Activated T-helper 1 cell treated with anti-CD3 and anti-CD28 coated beads, Interleukin-12 subunit alpha, Interleukin-12 subunit beta, Interleukin-2, Interleukin-4 antibody, amounts not matched to agents 30 ng/mL and 10 ng/mL and 1 ng/mL, durations not matched to agents 14 hours and 24 hours and 36 hours (primary cell): ENCODE measurements at regions of chr20 and their contacts with region 1.

Region 1: DNA sequence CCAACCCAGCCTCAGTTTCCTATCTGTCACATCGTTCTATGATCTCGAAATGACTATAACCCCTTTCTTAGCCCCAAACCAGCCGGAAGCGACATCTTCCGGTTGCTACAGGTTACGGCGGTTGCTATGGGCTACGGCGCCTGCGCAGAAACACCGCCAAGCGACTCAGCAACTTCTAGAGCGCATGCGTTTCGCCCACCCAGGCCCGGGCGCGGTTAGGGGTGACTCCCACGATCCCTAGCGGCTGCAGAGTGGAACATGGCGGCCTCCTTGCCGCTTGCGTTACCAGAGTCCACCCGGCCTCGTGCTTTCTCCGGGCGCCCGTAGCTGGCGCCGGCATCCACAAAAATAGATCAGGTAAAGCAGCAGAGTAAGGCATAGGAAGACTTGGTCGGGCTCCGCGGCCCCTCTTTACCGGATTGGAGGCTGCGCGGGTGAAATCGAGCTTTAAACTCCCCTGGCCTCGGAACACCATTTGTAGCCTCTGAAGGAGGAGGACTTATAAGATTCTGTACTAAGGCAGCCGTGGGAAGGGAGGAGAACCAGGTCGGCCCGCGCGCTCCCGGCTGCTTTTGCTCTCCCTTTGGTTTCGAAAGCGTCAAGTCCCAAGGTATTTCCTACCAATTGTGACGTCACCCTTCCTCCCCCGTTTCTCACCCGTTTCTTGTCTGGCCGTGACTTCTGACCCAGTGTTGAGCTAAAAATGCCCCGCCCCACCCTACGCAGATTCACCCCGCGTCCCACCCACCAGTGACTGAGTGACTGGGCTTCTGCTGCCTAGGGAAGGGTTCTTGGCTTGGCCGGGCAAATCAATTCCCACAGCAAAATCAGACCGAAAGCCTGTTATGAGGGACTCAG is 3.5 kb downstream of the SDCBP2 start:
- DNase-seq: peak; percentile 98
- H3K4me3 Mint-ChIP-seq: no peak overlapping the region
- H3K27ac Mint-ChIP-seq: no peak overlapping the region
- H3K4me1 Mint-ChIP-seq: peaks cover 14% of the 10 kb centered on the region
- H3K27me3 Mint-ChIP-seq: peaks cover 6% of the 10 kb centered on the region

Region 2: GRCh38 chr20:1225783-1226654 is 99.4 kb before region 1 on chr20 and contains the start of gene RAD21L1:
- intact Hi-C with region 1: loop called (anchors 1 kb)
- DNase-seq: peak; percentile 57
- H3K4me3 Mint-ChIP-seq: peak within 1 kb of the TSS; percentile 84
- H3K27ac Mint-ChIP-seq: no peak within 1 kb of the TSS
- H3K4me1 Mint-ChIP-seq: peaks cover 7% of the 10 kb centered on the region
- H3K27me3 Mint-ChIP-seq: peaks cover 36% of the 10 kb centered on the region
- total RNA-seq, gene RAD21L1: not detected in 2 replicates

Region 3: GRCh38 chr20:1266167-1266973 is 59.0 kb before region 1 on chr20 and contains the start of gene SNPH:
- intact Hi-C with region 1: loop called (anchors 2 kb)
- DNase-seq: peak; percentile 63
- H3K4me3 Mint-ChIP-seq: peak within 1 kb of the TSS; percentile 89
- H3K27ac Mint-ChIP-seq: peak within 1 kb of the TSS; percentile 87
- H3K4me1 Mint-ChIP-seq: peaks cover 32% of the 10 kb centered on the region
- H3K27me3 Mint-ChIP-seq: peaks cover 3% of the 10 kb centered on the region
- total RNA-seq, gene SNPH: 2.1 and 2.5 TPM in 2 replicates

Region 4: GRCh38 chr20:1313236-1313964 is 12.0 kb before region 1 on chr20:
- intact Hi-C with region 1: loop called (anchors 1 kb)
- DNase-seq: peak; percentile 47
- H3K4me3 Mint-ChIP-seq: no peak overlapping the region
- H3K27ac Mint-ChIP-seq: no peak overlapping the region
- H3K4me1 Mint-ChIP-seq: peaks cover 16% of the 10 kb centered on the region
- H3K27me3 Mint-ChIP-seq: peaks cover 13% of the 10 kb centered on the region

Region 5: GRCh38 chr20:1357921-1358671 is 32.7 kb after region 1 on chr20:
- intact Hi-C with region 1: loop called (anchors 1 kb)
- DNase-seq: peak; percentile 60
- H3K4me3 Mint-ChIP-seq: peak overlapping the region; percentile 68
- H3K27ac Mint-ChIP-seq: peak overlapping the region; percentile 88
- H3K4me1 Mint-ChIP-seq: peaks cover 62% of the 10 kb centered on the region
- H3K27me3 Mint-ChIP-seq: no peaks in the 10 kb centered on the region

Region 6: DNA sequence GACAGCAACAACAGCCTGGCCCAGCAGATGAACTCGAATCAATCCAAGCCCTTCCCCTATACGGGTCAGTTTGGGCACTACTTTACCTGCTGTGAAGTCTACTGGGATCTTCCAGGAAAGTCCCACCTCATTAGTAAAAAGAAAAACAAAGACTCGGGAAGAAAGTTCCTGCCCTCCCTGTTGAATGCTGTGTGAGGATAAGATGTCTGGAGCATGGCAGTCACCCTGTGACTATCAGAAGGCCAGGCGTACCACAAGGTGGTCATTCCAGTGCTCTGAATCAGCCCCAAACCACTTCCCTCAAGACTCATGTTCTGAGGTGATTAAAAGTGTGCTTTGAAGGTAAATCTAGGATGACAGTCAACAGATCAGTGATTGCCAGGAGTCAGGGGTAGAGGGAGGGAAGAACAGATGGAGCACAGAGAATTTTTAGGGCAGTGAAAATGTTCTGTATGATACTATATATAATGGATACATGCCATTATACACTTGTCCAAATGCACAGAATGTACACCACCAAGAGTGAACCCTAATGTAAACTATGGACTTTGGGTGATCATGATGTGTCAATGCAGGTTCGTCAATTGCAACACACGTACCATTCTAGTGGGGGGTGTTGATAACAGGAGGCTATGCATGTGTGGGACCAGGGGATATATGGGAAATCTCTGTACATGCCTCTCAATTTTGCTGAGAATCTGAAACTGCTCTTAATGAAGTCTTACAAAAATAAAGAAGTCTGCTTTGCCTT is 52.8 kb after region 1 on chr20:
- intact Hi-C with region 1: loop called (anchors 1 kb)
- DNase-seq: no peak
- H3K4me3 Mint-ChIP-seq: no peak overlapping the region
- H3K27ac Mint-ChIP-seq: peak overlapping the region; percentile 81
- H3K4me1 Mint-ChIP-seq: peaks cover 89% of the 10 kb centered on the region
- H3K27me3 Mint-ChIP-seq: no peaks in the 10 kb centered on the region